B cell (primary cell): ENCODE measurements at regions of chr13 and their contacts with region 1.

Region 1: GRCh38 chr13:108218044-108218974 is at the start of gene ABHD13:
- DNase-seq: peak; percentile 96
- ATAC-seq: peak; percentile 65
- H3K4me3 ChIP-seq: peak within 1 kb of the TSS; percentile 80 to 90 (median 86)
- H3K4me3 Mint-ChIP-seq: peak within 1 kb of the TSS; percentile 96
- H3K27ac ChIP-seq: peak within 1 kb of the TSS; percentile 85 to 92
- H3K27ac Mint-ChIP-seq: peak within 1 kb of the TSS; percentile 98
- H3K4me1 ChIP-seq: peaks cover 46 to 52% of the 10 kb centered on the region in 2 donors
- H3K4me1 Mint-ChIP-seq: peaks cover 60% of the 10 kb centered on the region
- H3K27me3 ChIP-seq: no peaks in the 10 kb centered on the region
- H3K27me3 Mint-ChIP-seq: no peaks in the 10 kb centered on the region
- CTCF ChIP-seq: peak; percentile 27
- total RNA-seq, gene ABHD13: 14.3 and 14.6 TPM in 2 replicates

Region 2: GRCh38 chr13:108176685-108177274 is 41.5 kb before region 1 on chr13:
- CTCF ChIA-PET with region 1: interaction called, 89 read pairs
- POLR2A ChIA-PET with region 1: interaction called, 8 read pairs
- intact Hi-C with region 1: loop called (anchors 2 kb)
- DNase-seq: peak; percentile 79
- ATAC-seq: peak; percentile 41
- H3K4me3 ChIP-seq: no peak overlapping the region
- H3K4me3 Mint-ChIP-seq: no peak overlapping the region
- H3K27ac ChIP-seq: no peak overlapping the region
- H3K27ac Mint-ChIP-seq: no peak overlapping the region
- H3K4me1 ChIP-seq: no peaks in the 10 kb centered on the region
- H3K4me1 Mint-ChIP-seq: peaks cover 2% of the 10 kb centered on the region
- H3K27me3 ChIP-seq: no peaks in the 10 kb centered on the region
- H3K27me3 Mint-ChIP-seq: no peaks in the 10 kb centered on the region
- CTCF ChIP-seq: peak; percentile 83

Region 3: GRCh38 chr13:108185223-108185622 is 33.1 kb before region 1 on chr13:
- CTCF ChIA-PET with region 1: interaction called, 89 read pairs
- POLR2A ChIA-PET with region 1: interaction called, 8 read pairs
- intact Hi-C with region 1: loop called (anchors 2 kb)
- DNase-seq: peak; percentile 65
- ATAC-seq: peak; percentile 82
- H3K4me3 ChIP-seq: peak overlapping the region in 1 of 5 experiments; percentile 43
- H3K4me3 Mint-ChIP-seq: peak overlapping the region; percentile 70
- H3K27ac ChIP-seq: peak overlapping the region; percentile 75 to 77
- H3K27ac Mint-ChIP-seq: peak overlapping the region; percentile 96
- H3K4me1 ChIP-seq: peaks cover 23 to 30% of the 10 kb centered on the region in 2 donors
- H3K4me1 Mint-ChIP-seq: peaks cover 27% of the 10 kb centered on the region
- H3K27me3 ChIP-seq: no peaks in the 10 kb centered on the region
- H3K27me3 Mint-ChIP-seq: peaks cover 3% of the 10 kb centered on the region
- CTCF ChIP-seq: no peak

Region 4: DNA sequence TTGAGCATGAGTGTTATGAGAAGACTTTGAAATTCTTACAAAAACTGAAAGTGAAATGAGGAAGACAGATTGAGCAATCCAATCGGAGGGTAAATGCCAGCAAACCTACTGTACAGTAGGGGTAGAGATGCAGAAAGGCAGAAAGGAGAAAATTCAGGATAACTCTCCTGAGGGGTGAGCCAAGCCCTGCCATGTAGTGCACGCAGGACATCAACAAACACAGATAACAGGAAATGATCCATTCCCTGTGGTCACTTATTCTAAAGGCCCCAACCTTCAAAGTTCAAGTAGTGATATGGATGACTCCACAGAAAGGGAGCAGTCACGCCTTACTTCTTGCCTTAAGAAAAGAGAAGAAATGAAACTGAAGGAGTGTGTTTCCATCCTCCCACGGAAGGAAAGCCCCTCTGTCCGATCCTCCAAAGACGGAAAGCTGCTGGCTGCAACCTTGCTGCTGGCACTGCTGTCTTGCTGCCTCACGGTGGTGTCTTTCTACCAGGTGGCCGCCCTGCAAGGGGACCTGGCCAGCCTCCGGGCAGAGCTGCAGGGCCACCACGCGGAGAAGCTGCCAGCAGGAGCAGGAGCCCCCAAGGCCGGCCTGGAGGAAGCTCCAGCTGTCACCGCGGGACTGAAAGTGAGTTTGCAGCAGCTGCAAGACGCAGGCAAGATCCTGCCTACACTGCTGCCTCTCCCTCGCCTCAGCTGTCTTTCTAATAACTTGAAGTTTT is 51.5 kb after region 1 on chr13 and contains the start of gene TNFSF13B:
- CTCF ChIA-PET with region 1: interaction called, 5 read pairs
- POLR2A ChIA-PET with region 1: interaction called, 4 read pairs
- intact Hi-C with region 1: loop called (anchors 2 kb)
- DNase-seq: peak; percentile 65
- ATAC-seq: peak; percentile 67
- H3K4me3 ChIP-seq: peak within 1 kb of the TSS; percentile 45 to 74 (median 64)
- H3K4me3 Mint-ChIP-seq: peak within 1 kb of the TSS; percentile 86
- H3K27ac ChIP-seq: peak within 1 kb of the TSS; percentile 61 to 83
- H3K27ac Mint-ChIP-seq: peak within 1 kb of the TSS; percentile 87
- H3K4me1 ChIP-seq: peaks cover 37 to 44% of the 10 kb centered on the region in 2 donors
- H3K4me1 Mint-ChIP-seq: peaks cover 51% of the 10 kb centered on the region
- H3K27me3 ChIP-seq: no peaks in the 10 kb centered on the region
- H3K27me3 Mint-ChIP-seq: no peaks in the 10 kb centered on the region
- CTCF ChIP-seq: peak; percentile 22
- total RNA-seq, gene TNFSF13B: 4.5 and 4.7 TPM in 2 replicates

Region 5: DNA sequence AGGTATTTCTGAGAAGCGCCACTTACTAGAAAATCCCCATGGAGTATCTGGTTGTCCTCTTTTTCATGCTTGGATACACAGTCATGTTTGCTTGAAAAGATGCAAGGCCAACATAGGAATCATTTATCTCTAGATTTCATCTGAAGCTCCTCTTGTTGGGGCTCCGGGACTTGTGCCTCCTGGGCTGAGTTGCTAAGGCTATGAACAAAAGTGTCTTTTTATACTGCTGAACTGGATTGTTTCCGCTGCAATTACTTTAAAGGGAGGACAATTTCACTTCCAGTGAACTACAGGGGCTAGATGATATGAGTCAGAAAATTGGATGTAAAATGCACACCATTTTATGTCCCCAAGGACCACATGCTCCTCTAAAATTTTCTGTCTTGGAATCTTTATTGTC is 165.4 kb after region 1 on chr13:
- CTCF ChIA-PET with region 1: no interaction called
- POLR2A ChIA-PET with region 1: no interaction called
- intact Hi-C with region 1: no loop called
- DNase-seq: no peak
- ATAC-seq: no peak
- H3K4me3 ChIP-seq: no peak overlapping the region
- H3K4me3 Mint-ChIP-seq: no peak overlapping the region
- H3K27ac ChIP-seq: no peak overlapping the region
- H3K27ac Mint-ChIP-seq: no peak overlapping the region
- H3K4me1 ChIP-seq: no peaks in the 10 kb centered on the region
- H3K4me1 Mint-ChIP-seq: no peaks in the 10 kb centered on the region
- H3K27me3 ChIP-seq: no peaks in the 10 kb centered on the region
- H3K27me3 Mint-ChIP-seq: peaks cover 5% of the 10 kb centered on the region
- CTCF ChIP-seq: no peak

Region 6: DNA sequence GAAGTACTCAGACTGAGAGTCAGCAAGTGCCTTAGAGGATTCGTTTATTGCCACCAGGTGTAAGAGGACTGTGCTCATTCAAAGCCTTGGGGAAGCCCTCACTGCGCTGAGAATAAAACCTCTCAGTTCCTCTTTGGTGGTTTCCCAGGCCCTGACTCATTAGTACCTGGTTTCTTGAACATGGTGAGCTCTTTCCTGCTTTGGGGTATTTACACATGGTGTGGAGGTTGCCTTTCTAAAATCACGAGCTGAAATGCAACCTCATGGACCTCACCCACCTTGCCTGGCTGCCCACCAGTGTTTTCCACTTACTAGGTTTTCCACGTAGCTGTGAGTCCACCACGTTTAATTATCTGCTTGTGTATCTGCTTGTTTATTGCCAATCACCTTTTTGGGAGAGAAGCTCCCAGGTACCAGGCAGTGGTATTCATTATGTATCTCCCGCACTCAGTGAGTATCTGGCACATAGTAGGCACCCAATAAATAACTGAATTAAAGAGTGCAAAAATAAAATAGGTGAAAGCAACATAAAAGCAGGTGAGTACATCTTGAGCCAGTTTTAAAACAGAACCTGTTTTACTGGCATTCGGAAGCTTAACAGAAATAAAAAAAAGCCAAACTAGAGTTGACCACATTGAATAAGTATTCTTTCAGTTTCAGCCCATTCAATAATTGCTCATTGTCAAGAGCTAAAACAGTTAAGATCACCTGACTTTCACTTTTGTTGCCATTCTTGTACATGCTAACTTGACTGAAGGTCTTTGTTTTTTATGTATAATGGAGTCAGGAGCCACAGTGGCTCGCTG is 944.1 kb after region 1 on chr13:
- CTCF ChIA-PET with region 1: no interaction called
- POLR2A ChIA-PET with region 1: no interaction called
- intact Hi-C with region 1: loop called (anchors 10 kb)
- DNase-seq: peak; percentile 86
- ATAC-seq: peak; percentile 93
- H3K4me3 ChIP-seq: no peak overlapping the region
- H3K4me3 Mint-ChIP-seq: peak overlapping the region; percentile 82
- H3K27ac ChIP-seq: peak overlapping the region in 1 of 2 donors; percentile 50
- H3K27ac Mint-ChIP-seq: peak overlapping the region; percentile 85
- H3K4me1 ChIP-seq: peaks cover 18 to 33% of the 10 kb centered on the region in 2 donors
- H3K4me1 Mint-ChIP-seq: peaks cover 37% of the 10 kb centered on the region
- H3K27me3 ChIP-seq: peaks cover 0 to 4% (median 2%) of the 10 kb centered on the region in 4 experiments
- H3K27me3 Mint-ChIP-seq: peaks cover 26% of the 10 kb centered on the region
- CTCF ChIP-seq: no peak